MCF 10A (cell line): ENCODE measurements at regions of chr1 and their contacts with region 1.

Region 1: GRCh38 chr1:46179138-46180081 is 3.1 kb upstream of the P3R3URF start:
- DNase-seq: peak; percentile 94
- H3K4me3 Mint-ChIP-seq: no peak overlapping the region
- H3K27ac Mint-ChIP-seq: no peak overlapping the region
- H3K4me1 Mint-ChIP-seq: peaks cover 7% of the 10 kb centered on the region
- H3K27me3 Mint-ChIP-seq: no peaks in the 10 kb centered on the region
- CTCF ChIP-seq: peak; percentile 89

Region 2: DNA sequence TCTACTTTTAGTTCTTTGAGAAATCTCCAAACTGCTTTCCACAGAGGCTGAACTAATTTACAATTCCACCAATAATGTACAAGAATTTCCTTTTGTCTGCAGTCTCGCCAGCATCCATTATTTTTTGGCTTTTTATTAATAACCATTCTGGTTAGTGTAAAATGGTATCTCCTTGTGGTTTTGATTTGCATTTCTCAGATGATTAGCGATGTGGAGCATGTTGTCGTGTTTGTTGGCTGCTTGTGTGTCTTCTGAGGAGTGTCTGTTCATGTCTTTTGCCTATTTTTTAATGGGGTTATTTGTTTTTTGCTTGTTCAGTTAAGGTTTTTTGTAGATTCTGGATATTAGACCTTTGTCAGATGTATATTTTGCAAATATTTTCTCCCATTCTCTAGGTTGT is 244.5 kb before region 1 on chr1:
- CTCF ChIA-PET with region 1: no interaction called
- POLR2A ChIA-PET with region 1: no interaction called
- intact Hi-C with region 1: no loop called
- DNase-seq: no peak
- H3K4me3 Mint-ChIP-seq: no peak overlapping the region
- H3K27ac Mint-ChIP-seq: no peak overlapping the region
- H3K4me1 Mint-ChIP-seq: no peaks in the 10 kb centered on the region
- H3K27me3 Mint-ChIP-seq: no peaks in the 10 kb centered on the region
- CTCF ChIP-seq: no peak

Region 3: GRCh38 chr1:46036894-46037839 is 142.2 kb before region 1 on chr1:
- CTCF ChIA-PET with region 1: interaction called, 202 read pairs
- POLR2A ChIA-PET with region 1: interaction called, 8 read pairs
- intact Hi-C with region 1: loop called (anchors 1 kb)
- DNase-seq: peak; percentile 83
- H3K4me3 Mint-ChIP-seq: no peak overlapping the region
- H3K27ac Mint-ChIP-seq: no peak overlapping the region
- H3K4me1 Mint-ChIP-seq: no peaks in the 10 kb centered on the region
- H3K27me3 Mint-ChIP-seq: no peaks in the 10 kb centered on the region
- CTCF ChIP-seq: peak; percentile 97

Region 4: DNA sequence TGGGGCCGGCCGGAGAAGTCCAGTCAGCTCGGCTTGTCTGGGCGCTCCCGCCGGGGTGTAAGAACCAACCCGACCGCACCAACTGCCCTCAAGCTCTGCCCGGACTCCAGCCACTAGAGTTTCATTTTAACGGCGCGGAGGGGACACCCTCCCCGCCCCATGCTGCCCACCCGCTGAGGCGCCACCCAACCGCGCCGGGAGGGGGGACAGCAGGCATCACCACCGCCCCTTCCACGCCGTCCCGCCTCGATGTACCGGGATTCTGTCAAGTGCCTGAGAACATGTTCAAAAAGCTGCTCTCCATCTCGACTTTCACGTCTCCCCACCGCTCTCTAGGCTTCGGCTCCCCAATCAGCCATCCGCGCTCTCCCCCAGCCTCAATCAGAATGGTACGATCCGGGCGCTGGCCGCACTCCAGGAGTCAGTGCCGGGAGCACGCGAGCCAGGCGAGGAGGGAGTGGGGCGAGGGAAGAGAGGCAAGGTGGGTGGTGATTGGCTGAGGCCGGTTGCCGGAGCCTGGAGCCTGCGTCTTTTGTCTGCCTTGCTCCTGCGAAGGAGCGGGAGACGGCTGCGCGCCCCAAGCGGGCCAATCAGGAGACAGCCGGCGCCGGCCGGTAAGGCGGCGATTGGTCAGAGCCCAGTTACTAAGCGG is 46.8 kb before region 1 on chr1 and contains the start of gene PIK3R3:
- CTCF ChIA-PET with region 1: interaction called, 15 read pairs
- POLR2A ChIA-PET with region 1: interaction called, 68 read pairs
- intact Hi-C with region 1: loop called (anchors 1 kb)
- DNase-seq: peak; percentile 98
- H3K4me3 Mint-ChIP-seq: peak within 1 kb of the TSS; percentile 75
- H3K27ac Mint-ChIP-seq: peak within 1 kb of the TSS; percentile 100
- H3K4me1 Mint-ChIP-seq: peaks cover 43% of the 10 kb centered on the region
- H3K27me3 Mint-ChIP-seq: no peaks in the 10 kb centered on the region
- CTCF ChIP-seq: no peak
- total RNA-seq, gene PIK3R3: 8.0 and 9.3 TPM in 2 replicates

Region 5: DNA sequence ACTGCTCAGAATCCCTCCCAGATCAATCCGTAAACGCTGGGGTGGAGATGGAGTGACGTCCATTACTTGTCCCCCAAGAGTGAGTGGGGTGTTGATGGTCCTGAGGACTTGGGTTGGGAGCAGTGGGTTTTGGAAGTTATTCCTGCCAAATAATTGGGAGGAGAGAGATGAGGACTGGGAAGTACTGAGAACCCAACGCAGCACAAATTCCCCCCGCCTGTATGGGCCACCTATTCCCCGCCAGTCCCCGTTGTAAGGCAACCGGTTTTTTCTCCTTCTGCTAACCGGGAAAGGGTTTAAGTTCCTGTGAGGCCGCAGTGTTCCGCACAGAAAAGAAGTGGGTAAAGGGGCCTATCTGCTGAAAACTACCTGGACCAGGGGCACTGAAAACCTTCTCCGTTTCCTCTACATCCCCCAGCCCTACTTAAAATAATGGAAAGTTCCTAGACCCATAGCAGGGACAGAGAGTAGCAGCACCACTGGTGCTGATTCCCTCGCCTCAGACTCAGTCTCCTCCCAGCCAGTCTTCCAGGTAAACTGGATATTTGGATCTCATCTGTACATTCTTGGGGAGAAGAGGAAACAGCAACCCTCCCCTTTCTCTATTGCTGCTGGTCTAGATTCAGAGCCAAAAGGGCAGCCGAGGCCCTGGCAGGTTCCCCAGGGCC is 24.5 kb after region 1 on chr1:
- CTCF ChIA-PET with region 1: interaction called, 27 read pairs
- POLR2A ChIA-PET with region 1: interaction called, 125 read pairs
- intact Hi-C with region 1: no loop called
- DNase-seq: peak; percentile 9
- H3K4me3 Mint-ChIP-seq: peak overlapping the region; percentile 75
- H3K27ac Mint-ChIP-seq: peak overlapping the region; percentile 73
- H3K4me1 Mint-ChIP-seq: peaks cover 28% of the 10 kb centered on the region
- H3K27me3 Mint-ChIP-seq: no peaks in the 10 kb centered on the region
- CTCF ChIP-seq: no peak

Region 6: DNA sequence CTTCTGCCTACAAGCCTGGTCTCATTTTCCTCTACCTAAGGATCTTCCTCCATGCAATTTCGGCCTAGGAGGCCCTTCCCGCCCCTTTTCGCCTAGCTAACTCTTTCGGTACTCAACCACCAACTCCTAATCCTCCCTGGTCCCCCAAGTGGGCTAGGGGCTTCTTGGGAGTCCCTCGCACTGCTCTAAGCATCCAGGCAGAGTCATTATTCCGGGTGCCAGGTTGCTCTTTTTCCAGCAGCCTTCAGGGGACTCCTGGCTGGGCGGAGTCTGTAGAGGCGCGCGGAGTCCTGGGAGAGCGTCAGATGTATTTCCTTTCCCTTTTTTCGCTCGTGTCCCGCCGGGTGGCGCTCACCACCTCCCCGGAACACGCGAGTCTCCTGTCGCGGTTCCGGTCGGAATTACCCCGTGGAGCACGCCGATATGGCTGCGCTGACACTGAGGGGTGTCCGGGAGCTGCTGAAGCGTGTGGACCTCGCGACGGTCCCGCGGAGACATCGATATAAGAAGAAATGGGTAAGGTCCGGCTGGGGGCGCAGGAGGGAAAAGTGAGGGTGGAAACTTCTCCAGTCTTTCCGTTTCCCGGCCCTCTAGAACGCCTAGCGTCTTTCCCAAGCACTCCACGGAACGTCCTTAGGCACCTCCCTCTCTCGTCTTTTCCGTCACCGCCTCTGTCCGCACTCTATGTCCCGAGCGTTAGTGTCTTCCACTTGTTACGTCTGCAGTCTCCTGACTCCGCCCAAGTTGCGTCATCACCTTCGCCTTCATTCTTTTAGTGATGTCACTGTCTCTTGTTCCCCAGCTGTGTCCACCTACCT is 161.2 kb after region 1 on chr1 and contains the start of gene NSUN4:
- CTCF ChIA-PET with region 1: interaction called, 3 read pairs
- POLR2A ChIA-PET with region 1: interaction called, 3 read pairs
- intact Hi-C with region 1: loop called (anchors 5 kb)
- DNase-seq: peak; percentile 92
- H3K4me3 Mint-ChIP-seq: peak within 1 kb of the TSS; percentile 96
- H3K27ac Mint-ChIP-seq: peak within 1 kb of the TSS; percentile 99
- H3K4me1 Mint-ChIP-seq: peaks cover 26% of the 10 kb centered on the region
- H3K27me3 Mint-ChIP-seq: no peaks in the 10 kb centered on the region
- CTCF ChIP-seq: peak; percentile 75
- total RNA-seq, gene NSUN4: 27.4 and 28.4 TPM in 2 replicates